IMR-90 (cell line): ENCODE measurements at regions of chr3 and their contacts with region 1.

Region 1: GRCh38 chr3:188954590-188955208 is 217.1 kb upstream of the TPRG1 start:
- DNase-seq: peak; percentile 88
- ATAC-seq: peak; percentile 49
- H3K4me3 ChIP-seq: no peak overlapping the region
- H3K27ac ChIP-seq: no peak overlapping the region
- H3K4me1 ChIP-seq: peaks cover 10% of the 10 kb centered on the region
- H3K27me3 ChIP-seq: no peaks in the 10 kb centered on the region
- CTCF ChIP-seq: peak; percentile 97
- POLR2A ChIP-seq: peak; percentile 59; the same call in 1 of the 2 replicates
- RAD21 ChIP-seq: peak; percentile 100

Region 2: DNA sequence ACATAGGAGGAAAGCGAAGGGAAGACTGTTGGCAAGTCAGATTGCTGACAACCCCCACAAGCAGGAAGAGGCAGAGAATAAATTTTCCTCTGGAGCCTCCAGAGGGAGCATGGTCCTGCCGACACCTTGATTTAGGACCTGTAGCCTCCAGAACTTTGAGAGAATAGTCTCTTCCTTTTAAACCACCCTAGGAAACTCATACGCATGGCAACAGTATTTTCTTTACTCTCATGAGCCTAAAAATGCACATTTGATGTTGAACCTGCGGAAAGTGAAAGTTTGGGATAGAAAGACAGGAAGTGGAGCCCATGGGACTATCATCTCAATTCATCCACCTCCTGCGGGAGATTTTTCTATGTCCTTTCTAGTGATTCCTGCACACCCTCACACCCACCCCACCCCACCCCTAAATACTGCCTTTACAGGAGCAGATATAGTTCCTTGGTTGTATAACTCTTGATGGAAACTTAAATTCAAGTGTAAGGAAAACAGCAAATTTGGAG is 917.4 kb before region 1 on chr3:
- CTCF ChIA-PET with region 1: no interaction called
- POLR2A ChIA-PET with region 1: no interaction called
- dilution Hi-C with region 1: no loop called
- in situ Hi-C with region 1: loop called (anchors 25 kb)
- intact Hi-C with region 1: no loop called
- DNase-seq: peak; percentile 45
- ATAC-seq: peak; percentile 49; the same call in 1 of the 2 replicates
- H3K4me3 ChIP-seq: no peak overlapping the region
- H3K27ac ChIP-seq: no peak overlapping the region
- H3K4me1 ChIP-seq: peaks cover 3% of the 10 kb centered on the region; the same call in 1 of the 2 replicates
- H3K27me3 ChIP-seq: no peaks in the 10 kb centered on the region
- CTCF ChIP-seq: peak; percentile 46
- POLR2A ChIP-seq: no peak
- RAD21 ChIP-seq: peak; percentile 56

Region 3: GRCh38 chr3:188262913-188263683 is 691.6 kb before region 1 on chr3:
- CTCF ChIA-PET with region 1: interaction called, 3 read pairs
- POLR2A ChIA-PET with region 1: no interaction called
- dilution Hi-C with region 1: no loop called
- in situ Hi-C with region 1: loop called (anchors 10 kb)
- intact Hi-C with region 1: loop called (anchors 2 kb)
- DNase-seq: peak; percentile 83
- ATAC-seq: peak; percentile 16
- H3K4me3 ChIP-seq: no peak overlapping the region
- H3K27ac ChIP-seq: peak overlapping the region; percentile 37
- H3K4me1 ChIP-seq: peaks cover 44% of the 10 kb centered on the region
- H3K27me3 ChIP-seq: no peaks in the 10 kb centered on the region
- CTCF ChIP-seq: no peak
- POLR2A ChIP-seq: no peak
- RAD21 ChIP-seq: no peak

Region 4: GRCh38 chr3:188531210-188531609 is 423.5 kb before region 1 on chr3:
- CTCF ChIA-PET with region 1: interaction called, 5 read pairs
- POLR2A ChIA-PET with region 1: interaction called, 8 read pairs
- dilution Hi-C with region 1: no loop called
- in situ Hi-C with region 1: no loop called
- intact Hi-C with region 1: loop called (anchors 10 kb)
- DNase-seq: peak; percentile 59
- ATAC-seq: no peak
- H3K4me3 ChIP-seq: no peak overlapping the region
- H3K27ac ChIP-seq: no peak overlapping the region
- H3K4me1 ChIP-seq: peaks cover 17% of the 10 kb centered on the region
- H3K27me3 ChIP-seq: no peaks in the 10 kb centered on the region
- CTCF ChIP-seq: no peak
- POLR2A ChIP-seq: no peak
- RAD21 ChIP-seq: no peak

Region 5: DNA sequence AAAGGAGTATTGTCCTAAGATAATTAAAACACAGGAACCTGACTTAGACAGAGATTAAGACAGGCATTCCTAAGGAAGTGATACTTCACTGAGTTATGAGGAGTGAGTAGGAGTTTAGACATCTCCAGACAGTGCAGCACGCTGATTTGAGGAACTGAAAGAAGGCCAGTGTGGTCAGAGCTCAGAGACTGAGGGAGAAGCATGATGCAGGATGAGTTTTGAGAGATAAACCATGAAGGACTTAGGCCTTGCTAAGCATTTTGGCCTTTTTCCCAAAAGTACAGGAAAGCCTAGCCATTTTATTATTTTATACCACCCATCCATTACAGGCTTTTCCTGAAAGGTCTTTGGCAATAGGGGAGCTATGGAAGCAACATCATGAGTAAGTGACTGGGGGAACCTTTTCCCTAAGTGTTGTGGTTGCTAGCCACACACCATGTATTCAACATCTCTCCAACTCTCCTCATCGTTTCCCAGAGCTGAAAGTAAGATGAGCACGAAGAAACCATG is 158.5 kb before region 1 on chr3:
- CTCF ChIA-PET with region 1: interaction called, 3 read pairs
- POLR2A ChIA-PET with region 1: no interaction called
- dilution Hi-C with region 1: no loop called
- in situ Hi-C with region 1: no loop called
- intact Hi-C with region 1: loop called (anchors 5 kb)
- DNase-seq: peak; percentile 97
- ATAC-seq: peak; percentile 90
- H3K4me3 ChIP-seq: no peak overlapping the region
- H3K27ac ChIP-seq: peak overlapping the region; percentile 57; the same call in 1 of the 2 replicates
- H3K4me1 ChIP-seq: peaks cover 13% of the 10 kb centered on the region
- H3K27me3 ChIP-seq: no peaks in the 10 kb centered on the region
- CTCF ChIP-seq: no peak
- POLR2A ChIP-seq: peak; percentile 26; the same call in 1 of the 2 replicates
- RAD21 ChIP-seq: no peak; the same call in none of the 2 replicates

Region 6: GRCh38 chr3:188842639-188843038 is 112.1 kb before region 1 on chr3:
- CTCF ChIA-PET with region 1: no interaction called
- POLR2A ChIA-PET with region 1: no interaction called
- dilution Hi-C with region 1: no loop called
- in situ Hi-C with region 1: no loop called
- intact Hi-C with region 1: no loop called
- DNase-seq: peak; percentile 59
- ATAC-seq: peak; percentile 61
- H3K4me3 ChIP-seq: no peak overlapping the region
- H3K27ac ChIP-seq: no peak overlapping the region
- H3K4me1 ChIP-seq: peaks cover 5% of the 10 kb centered on the region
- H3K27me3 ChIP-seq: no peaks in the 10 kb centered on the region
- CTCF ChIP-seq: no peak
- POLR2A ChIP-seq: no peak
- RAD21 ChIP-seq: no peak

Region 7: DNA sequence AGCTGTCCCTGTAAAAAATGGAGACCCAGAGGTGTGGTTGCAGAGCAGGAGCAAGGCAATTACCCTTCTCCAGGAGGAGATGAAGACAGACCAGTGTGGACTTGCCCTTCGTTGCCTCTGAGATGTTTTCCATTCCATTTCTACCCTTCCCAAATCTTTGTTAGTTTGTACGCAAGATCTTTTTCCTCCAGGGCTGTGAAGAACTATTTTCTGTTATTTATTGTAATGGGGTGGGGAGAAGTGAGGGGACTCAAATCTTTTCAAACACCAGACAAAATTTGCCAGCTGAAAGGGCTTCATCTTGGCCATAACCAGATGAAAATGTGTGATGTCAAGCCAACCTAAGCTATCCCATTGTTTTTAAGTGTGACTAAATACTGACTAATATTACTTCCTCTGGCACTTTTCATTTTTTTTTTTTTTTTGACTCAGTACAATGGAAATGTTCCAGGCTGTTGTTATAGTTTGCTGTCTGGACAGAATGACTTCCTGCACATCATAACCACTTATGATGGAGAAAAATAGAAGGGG is 54.2 kb before region 1 on chr3:
- CTCF ChIA-PET with region 1: no interaction called
- POLR2A ChIA-PET with region 1: no interaction called
- dilution Hi-C with region 1: no loop called
- in situ Hi-C with region 1: no loop called
- intact Hi-C with region 1: no loop called
- DNase-seq: peak; percentile 84
- ATAC-seq: peak; percentile 58
- H3K4me3 ChIP-seq: no peak overlapping the region
- H3K27ac ChIP-seq: no peak overlapping the region
- H3K4me1 ChIP-seq: peaks cover 14% of the 10 kb centered on the region
- H3K27me3 ChIP-seq: no peaks in the 10 kb centered on the region
- CTCF ChIP-seq: no peak
- POLR2A ChIP-seq: no peak
- RAD21 ChIP-seq: no peak

Region 8: GRCh38 chr3:189148081-189148507 is 193.4 kb after region 1 on chr3:
- CTCF ChIA-PET with region 1: interaction called, 3 read pairs
- POLR2A ChIA-PET with region 1: no interaction called
- dilution Hi-C with region 1: no loop called
- in situ Hi-C with region 1: no loop called
- intact Hi-C with region 1: loop called (anchors 1 kb)
- DNase-seq: peak; percentile 67
- ATAC-seq: peak; percentile 91
- H3K4me3 ChIP-seq: no peak overlapping the region
- H3K27ac ChIP-seq: no peak overlapping the region
- H3K4me1 ChIP-seq: 0 out of 2 replicates have a peak, but pooled peaks cover 3% of the 10 kb centered on the region
- H3K27me3 ChIP-seq: peaks cover 9% of the 10 kb centered on the region
- CTCF ChIP-seq: peak; percentile 81
- POLR2A ChIP-seq: no peak
- RAD21 ChIP-seq: peak; percentile 79

Region 9: GRCh38 chr3:189375532-189375931 is 420.8 kb after region 1 on chr3:
- CTCF ChIA-PET with region 1: no interaction called
- POLR2A ChIA-PET with region 1: no interaction called
- dilution Hi-C with region 1: no loop called
- in situ Hi-C with region 1: no loop called
- intact Hi-C with region 1: no loop called
- DNase-seq: no peak
- ATAC-seq: no peak
- H3K4me3 ChIP-seq: no peak overlapping the region
- H3K27ac ChIP-seq: no peak overlapping the region
- H3K4me1 ChIP-seq: no peaks in the 10 kb centered on the region
- H3K27me3 ChIP-seq: no peaks in the 10 kb centered on the region
- CTCF ChIP-seq: no peak
- POLR2A ChIP-seq: no peak
- RAD21 ChIP-seq: no peak

Region 10: DNA sequence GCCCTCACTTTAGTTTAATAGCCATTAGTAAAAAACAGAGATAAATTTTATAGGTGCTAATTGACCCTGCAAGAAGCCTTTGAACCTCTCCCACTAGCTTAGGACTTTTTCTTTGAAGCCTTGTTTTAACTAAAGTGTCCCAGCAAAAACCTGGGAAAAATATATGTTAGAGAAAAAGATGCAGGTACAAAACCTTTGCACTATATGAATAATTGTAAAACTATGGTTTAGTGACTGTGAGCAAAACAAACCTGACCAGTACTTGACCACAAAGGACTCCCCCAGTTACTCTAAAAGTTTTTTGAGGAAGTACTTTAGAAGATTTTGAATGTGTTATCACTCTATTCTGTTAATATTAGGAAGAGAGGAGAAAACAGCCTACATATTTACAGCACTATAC is 553.2 kb after region 1 on chr3:
- CTCF ChIA-PET with region 1: no interaction called
- POLR2A ChIA-PET with region 1: no interaction called
- dilution Hi-C with region 1: no loop called
- in situ Hi-C with region 1: no loop called
- intact Hi-C with region 1: no loop called
- DNase-seq: no peak
- ATAC-seq: no peak
- H3K4me3 ChIP-seq: no peak overlapping the region
- H3K27ac ChIP-seq: no peak overlapping the region
- H3K4me1 ChIP-seq: no peaks in the 10 kb centered on the region
- H3K27me3 ChIP-seq: no peaks in the 10 kb centered on the region
- CTCF ChIP-seq: no peak
- POLR2A ChIP-seq: no peak
- RAD21 ChIP-seq: no peak